ENCODE measurements at regions of chr19 and their contacts with region 1.

Region 1: GRCh38 chr19:53103198-53103944 is at the start of gene ZNF160:
- DNase-seq: peak; percentile 97 to 100 (median 99)
- ATAC-seq: peak; percentile 90
- H3K4me3 ChIP-seq: peak within 1 kb of the TSS; percentile 81
- H3K4me3 Mint-ChIP-seq: peak within 1 kb of the TSS; percentile 97
- H3K27ac ChIP-seq: peak within 1 kb of the TSS; percentile 85 to 90
- H3K27ac Mint-ChIP-seq: peak within 1 kb of the TSS; percentile 96
- H3K4me1 ChIP-seq: peaks cover 27% of the 10 kb centered on the region
- H3K4me1 Mint-ChIP-seq: peaks cover 45% of the 10 kb centered on the region
- H3K27me3 ChIP-seq: no peaks in the 10 kb centered on the region
- H3K27me3 Mint-ChIP-seq: no peaks in the 10 kb centered on the region
- CTCF ChIP-seq: no peak
- total RNA-seq, gene ZNF160: 42.1 to 45.5 TPM

Region 2: GRCh38 chr19:52734893-52735661 is 368.3 kb before region 1 on chr19 and contains the start of gene ZNF611:
- CTCF ChIA-PET with region 1: no interaction called
- POLR2A ChIA-PET with region 1: no interaction called
- intact Hi-C with region 1: loop called in 1 of 2 experiments (anchors 5 kb)
- DNase-seq: peak; percentile 98 to 100 (median 99)
- ATAC-seq: peak; percentile 97
- H3K4me3 ChIP-seq: peak within 1 kb of the TSS; percentile 98
- H3K4me3 Mint-ChIP-seq: peak within 1 kb of the TSS; percentile 95
- H3K27ac ChIP-seq: peak within 1 kb of the TSS; percentile 74 to 93
- H3K27ac Mint-ChIP-seq: peak within 1 kb of the TSS; percentile 96
- H3K4me1 ChIP-seq: peaks cover 23% of the 10 kb centered on the region
- H3K4me1 Mint-ChIP-seq: peaks cover 28% of the 10 kb centered on the region
- H3K27me3 ChIP-seq: no peaks in the 10 kb centered on the region
- H3K27me3 Mint-ChIP-seq: no peaks in the 10 kb centered on the region
- CTCF ChIP-seq: peak; percentile 70
- total RNA-seq, gene ZNF611: 14.6 to 15.5 TPM

Region 3: DNA sequence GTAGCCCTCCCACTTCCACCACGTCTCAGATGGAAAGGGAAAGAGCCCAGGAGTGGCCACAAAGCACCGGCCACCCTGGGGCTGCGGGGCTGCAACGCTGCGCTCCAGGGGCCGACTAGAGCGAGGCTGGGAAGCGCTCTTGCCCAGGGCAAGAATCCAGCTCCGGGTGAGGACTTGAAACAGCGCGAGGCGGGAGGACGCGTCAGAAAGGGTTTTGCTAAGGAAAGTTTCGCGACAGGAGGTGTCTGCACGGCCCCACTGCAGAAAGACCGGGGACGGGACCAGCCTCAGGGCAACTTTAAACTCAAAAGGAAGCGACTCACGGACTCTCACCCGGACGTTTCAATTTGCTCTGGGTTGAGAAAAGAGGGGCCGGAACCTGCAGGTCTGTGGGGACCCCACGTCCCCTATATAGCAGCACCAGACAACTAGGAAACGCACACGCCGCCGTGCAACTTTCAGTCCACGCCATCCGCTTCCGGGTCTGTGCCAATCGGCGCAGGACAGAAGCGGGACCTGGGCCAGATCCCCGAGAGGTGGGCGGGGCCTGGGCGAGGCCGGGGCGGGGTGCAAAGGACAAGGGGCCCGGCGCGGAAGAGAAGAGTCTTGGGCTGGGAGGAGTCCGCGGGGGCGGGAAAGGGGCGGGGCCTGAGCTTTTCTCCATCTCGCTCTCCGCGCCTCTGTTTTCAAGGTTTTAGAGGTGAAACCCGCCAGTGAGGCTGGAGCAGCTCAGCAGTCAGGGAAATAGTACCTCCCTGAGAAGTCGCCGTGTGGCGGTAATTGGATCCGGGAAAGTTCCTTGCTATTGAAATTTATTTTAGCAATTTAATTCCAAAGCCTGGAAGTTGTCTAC is 140.8 kb before region 1 on chr19 and contains the start of gene ZNF816:
- CTCF ChIA-PET with region 1: no interaction called
- POLR2A ChIA-PET with region 1: interaction called, 3 read pairs
- intact Hi-C with region 1: loop called in 1 of 2 experiments (anchors 5 kb)
- DNase-seq: peak; percentile 97 to 100 (median 99)
- ATAC-seq: peak; percentile 99
- H3K4me3 ChIP-seq: peak within 1 kb of the TSS; percentile 78
- H3K4me3 Mint-ChIP-seq: peak within 1 kb of the TSS; percentile 97
- H3K27ac ChIP-seq: peak within 1 kb of the TSS; percentile 63 to 68
- H3K27ac Mint-ChIP-seq: peak within 1 kb of the TSS; percentile 97
- H3K4me1 ChIP-seq: peaks cover 20% of the 10 kb centered on the region
- H3K4me1 Mint-ChIP-seq: peaks cover 36% of the 10 kb centered on the region
- H3K27me3 ChIP-seq: no peaks in the 10 kb centered on the region
- H3K27me3 Mint-ChIP-seq: no peaks in the 10 kb centered on the region
- CTCF ChIP-seq: no peak
- total RNA-seq, gene ZNF816: 3.6 to 5.5 TPM

Region 4: DNA sequence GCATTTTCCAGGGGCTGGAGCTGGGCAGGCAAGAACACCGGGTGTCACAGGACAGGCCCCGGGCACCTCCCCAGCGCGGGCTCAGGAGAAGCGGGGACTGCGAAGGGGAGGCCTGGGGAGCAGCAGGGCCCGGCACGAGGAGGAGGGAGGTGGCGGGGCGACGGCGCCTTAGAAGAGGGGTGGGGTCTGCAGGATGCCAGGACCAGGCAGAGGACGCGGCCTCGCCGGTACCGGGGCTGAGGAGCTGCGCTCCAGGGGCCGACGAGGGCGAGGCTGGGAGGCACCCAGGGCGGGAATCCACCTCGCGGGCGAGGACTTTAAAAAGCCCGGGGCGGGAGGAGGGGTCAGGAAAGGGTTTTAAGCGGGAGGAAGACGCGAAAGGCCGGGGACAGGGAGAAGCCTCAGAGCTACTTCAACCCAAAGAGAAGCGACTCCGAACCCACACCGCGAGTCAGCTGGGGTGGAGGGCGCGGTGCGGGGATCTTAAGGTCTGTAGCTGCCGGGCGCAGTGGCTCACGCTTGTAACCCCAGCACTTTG is 54.8 kb after region 1 on chr19:
- CTCF ChIA-PET with region 1: no interaction called
- POLR2A ChIA-PET with region 1: no interaction called
- intact Hi-C with region 1: loop called (anchors 1 to 2 kb)
- DNase-seq: peak in 13 of 14 experiments; percentile 1 to 66 (median 9)
- ATAC-seq: peak; percentile 33
- H3K4me3 ChIP-seq: peak overlapping the region; percentile 71
- H3K4me3 Mint-ChIP-seq: peak overlapping the region; percentile 92
- H3K27ac ChIP-seq: peak overlapping the region; percentile 44 to 56
- H3K27ac Mint-ChIP-seq: peak overlapping the region; percentile 82
- H3K4me1 ChIP-seq: peaks cover 19% of the 10 kb centered on the region
- H3K4me1 Mint-ChIP-seq: peaks cover 26% of the 10 kb centered on the region
- H3K27me3 ChIP-seq: peaks cover 0 to 3% of the 10 kb centered on the region in 2 experiments
- H3K27me3 Mint-ChIP-seq: no peaks in the 10 kb centered on the region
- CTCF ChIP-seq: no peak

Region 5: DNA sequence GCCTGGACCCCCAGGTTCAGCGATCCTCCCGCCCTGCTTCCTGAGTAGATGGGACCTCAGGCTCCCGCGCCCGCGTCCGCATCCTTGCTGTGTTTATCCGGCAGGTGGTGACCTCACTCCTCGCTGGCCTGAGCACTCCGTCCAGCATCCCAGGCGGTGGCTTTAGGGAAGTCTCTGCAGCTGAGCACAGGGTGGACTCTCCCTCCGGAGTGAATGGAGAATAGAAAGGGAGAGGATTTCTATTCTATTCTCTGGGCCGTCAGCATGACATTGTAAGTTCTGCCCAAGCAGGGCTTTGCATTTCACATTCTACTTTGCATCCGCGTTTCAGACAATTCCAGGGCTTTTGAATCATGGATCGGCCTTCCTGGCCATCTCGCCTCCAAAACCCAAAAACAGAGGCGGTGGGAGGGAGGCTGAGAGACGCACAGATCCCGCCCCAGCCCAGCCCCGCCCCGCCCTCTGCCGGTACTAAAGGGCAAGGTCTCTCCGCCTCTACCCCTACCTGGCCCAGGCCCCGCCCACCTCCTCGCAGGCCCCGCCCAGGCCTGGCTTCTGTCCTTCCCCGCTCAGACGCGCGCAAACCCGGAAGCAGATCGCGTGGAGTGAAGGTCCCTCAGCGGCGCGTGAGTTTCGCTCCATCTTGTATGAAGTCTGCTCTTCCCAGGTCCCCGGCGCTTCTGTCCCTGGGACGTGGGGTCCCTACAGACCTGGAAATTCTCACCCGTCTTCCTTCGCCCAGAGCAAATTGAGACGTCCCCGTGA is 261.9 kb after region 1 on chr19 and contains the start of gene ZNF525:
- CTCF ChIA-PET with region 1: no interaction called
- POLR2A ChIA-PET with region 1: no interaction called
- intact Hi-C with region 1: loop called in 1 of 2 experiments (anchors 2 kb)
- DNase-seq: peak; percentile 95 to 99 (median 97)
- ATAC-seq: peak; percentile 99
- H3K4me3 ChIP-seq: peak within 1 kb of the TSS; percentile 74
- H3K4me3 Mint-ChIP-seq: peak within 1 kb of the TSS; percentile 96
- H3K27ac ChIP-seq: peak within 1 kb of the TSS; percentile 74 to 77
- H3K27ac Mint-ChIP-seq: peak within 1 kb of the TSS; percentile 91
- H3K4me1 ChIP-seq: peaks cover 19% of the 10 kb centered on the region
- H3K4me1 Mint-ChIP-seq: peaks cover 32% of the 10 kb centered on the region
- H3K27me3 ChIP-seq: no peaks in the 10 kb centered on the region
- H3K27me3 Mint-ChIP-seq: no peaks in the 10 kb centered on the region
- CTCF ChIP-seq: peak; percentile 55
- total RNA-seq, gene ZNF525: 13.5 to 16.3 TPM

Region 6: GRCh38 chr19:53511933-53512374 is 408.6 kb after region 1 on chr19:
- CTCF ChIA-PET with region 1: no interaction called
- POLR2A ChIA-PET with region 1: no interaction called
- intact Hi-C with region 1: loop called in 1 of 2 experiments (anchors 10 kb)
- DNase-seq: peak; percentile 18 to 75 (median 44)
- ATAC-seq: peak; percentile 72
- H3K4me3 ChIP-seq: no peak overlapping the region
- H3K4me3 Mint-ChIP-seq: no peak overlapping the region
- H3K27ac ChIP-seq: no peak overlapping the region
- H3K27ac Mint-ChIP-seq: no peak overlapping the region
- H3K4me1 ChIP-seq: peaks cover 3% of the 10 kb centered on the region
- H3K4me1 Mint-ChIP-seq: no peaks in the 10 kb centered on the region
- H3K27me3 ChIP-seq: peaks cover 0 to 1% of the 10 kb centered on the region in 2 experiments
- H3K27me3 Mint-ChIP-seq: peaks cover 11% of the 10 kb centered on the region
- CTCF ChIP-seq: peak; percentile 68